K562 (cell line): ENCODE measurements at regions of chr2 and their contacts with region 1.

Region 1: GRCh38 chr2:160994141-160995002 is 165.9 kb upstream of the TANK start:
- DNase-seq: peak; percentile 44 to 73 (median 56)
- ATAC-seq: peak; percentile 97
- H3K4me3 ChIP-seq: no peak overlapping the region
- H3K27ac ChIP-seq: no peak overlapping the region
- H3K4me1 ChIP-seq: no peaks in the 10 kb centered on the region
- H3K27me3 ChIP-seq: no peaks in the 10 kb centered on the region
- CTCF ChIP-seq: peak; percentile 69 to 91 (median 80); a peak in 5 of 6 replicates
- EP300 ChIP-seq: no peak
- POLR2A ChIP-seq: no peak
- RAD21 ChIP-seq: peak; percentile 70 to 83

Region 2: DNA sequence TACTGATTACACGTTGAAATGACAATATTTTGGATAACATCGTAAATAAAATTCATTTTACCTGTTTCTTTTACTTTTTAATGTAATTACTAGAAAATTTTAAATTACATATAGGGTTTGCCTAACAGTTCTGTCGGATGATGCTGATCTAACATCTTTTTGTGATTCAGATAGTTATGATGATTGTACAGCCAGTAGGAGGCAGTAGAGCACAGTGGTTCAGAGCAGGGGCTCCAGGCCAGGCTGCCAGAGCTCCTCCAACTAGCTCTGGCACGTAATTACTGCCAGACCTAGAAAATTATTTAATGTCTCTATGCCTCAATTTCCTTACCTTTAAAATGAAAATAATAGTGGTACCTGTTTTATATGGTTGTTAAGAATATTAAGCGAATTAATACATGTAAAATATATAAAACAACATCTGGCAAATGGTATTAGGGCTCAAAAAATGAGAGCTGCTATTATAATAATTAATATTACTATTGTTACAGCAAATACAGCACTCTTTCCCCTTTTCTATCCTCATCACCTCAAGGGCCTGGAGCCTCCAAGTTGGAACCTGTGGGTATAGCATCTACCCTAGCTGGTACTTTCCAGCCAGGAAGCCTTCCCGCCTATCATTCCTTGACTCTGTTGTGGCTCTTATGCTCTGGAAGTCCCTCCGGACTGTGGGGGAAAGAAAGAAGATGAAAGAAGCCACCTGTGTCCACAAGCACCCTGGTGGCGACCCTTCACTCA is 884.3 kb before region 1 on chr2:
- CTCF ChIA-PET with region 1: interaction called, 3 read pairs
- POLR2A ChIA-PET with region 1: no interaction called
- in situ Hi-C with region 1: no loop called
- intact Hi-C with region 1: loop called (anchors 2 kb)
- DNase-seq: peak; percentile 50 to 64 (median 61)
- ATAC-seq: peak; percentile 95
- H3K4me3 ChIP-seq: no peak overlapping the region
- H3K27ac ChIP-seq: no peak overlapping the region
- H3K4me1 ChIP-seq: no peaks in the 10 kb centered on the region
- H3K27me3 ChIP-seq: no peaks in the 10 kb centered on the region
- CTCF ChIP-seq: peak; percentile 64 to 85 (median 77)
- EP300 ChIP-seq: no peak
- POLR2A ChIP-seq: no peak
- RAD21 ChIP-seq: peak; percentile 73 to 75

Region 3: GRCh38 chr2:160252278-160252887 is 742.0 kb before region 1 on chr2:
- CTCF ChIA-PET with region 1: no interaction called
- POLR2A ChIA-PET with region 1: no interaction called
- in situ Hi-C with region 1: no loop called
- intact Hi-C with region 1: loop called (anchors 2 kb)
- DNase-seq: peak; percentile 28 to 39 (median 38)
- ATAC-seq: peak; percentile 53; the same call in 1 of the 3 replicates
- H3K4me3 ChIP-seq: no peak overlapping the region
- H3K27ac ChIP-seq: no peak overlapping the region
- H3K4me1 ChIP-seq: no peaks in the 10 kb centered on the region
- H3K27me3 ChIP-seq: no peaks in the 10 kb centered on the region
- CTCF ChIP-seq: peak; percentile 31 to 72 (median 56); a peak in 5 of 6 replicates
- EP300 ChIP-seq: no peak
- POLR2A ChIP-seq: no peak
- RAD21 ChIP-seq: peak; percentile 40 to 64

Region 4: DNA sequence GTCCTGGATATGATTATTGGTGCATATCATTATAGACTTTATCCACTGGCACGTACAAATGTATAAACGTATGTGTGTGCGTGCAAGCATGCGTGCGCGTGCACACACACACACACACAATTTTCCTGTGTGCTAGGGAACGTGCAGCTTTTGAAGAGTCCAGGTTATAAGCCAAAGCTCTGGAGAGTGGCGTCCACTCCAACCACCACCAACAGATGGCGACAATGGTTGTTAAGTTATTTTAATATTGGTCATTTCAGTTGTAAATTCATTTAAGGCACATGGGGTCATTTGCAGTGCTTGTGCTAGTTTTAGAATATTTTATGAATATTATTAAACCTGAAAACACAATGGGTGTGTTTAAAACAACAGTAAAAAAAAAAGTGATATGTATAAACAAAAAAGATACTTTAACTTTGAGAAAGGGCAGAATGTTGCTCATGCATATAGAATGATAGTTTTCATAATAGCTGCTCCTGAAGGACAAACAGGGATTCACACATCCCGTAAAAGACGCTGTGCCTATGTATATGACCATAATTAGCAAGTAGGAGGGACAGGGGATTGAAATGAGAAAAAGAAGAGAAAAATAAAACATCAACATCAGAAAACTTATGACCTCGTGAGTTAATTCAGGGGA is 670.1 kb before region 1 on chr2:
- CTCF ChIA-PET with region 1: interaction called, 7 read pairs
- POLR2A ChIA-PET with region 1: interaction called, 3 read pairs
- in situ Hi-C with region 1: no loop called
- intact Hi-C with region 1: loop called (anchors 1 kb)
- DNase-seq: peak; percentile 21 to 37 (median 23)
- ATAC-seq: peak; percentile 80
- H3K4me3 ChIP-seq: no peak overlapping the region
- H3K27ac ChIP-seq: no peak overlapping the region
- H3K4me1 ChIP-seq: no peaks in the 10 kb centered on the region
- H3K27me3 ChIP-seq: no peaks in the 10 kb centered on the region
- CTCF ChIP-seq: peak; percentile 43 to 66 (median 57); a peak in 5 of 6 replicates
- EP300 ChIP-seq: no peak
- POLR2A ChIP-seq: no peak
- RAD21 ChIP-seq: peak in 1 of 2 experiments; percentile 46; a peak in 3 of 4 replicates

Region 5: GRCh38 chr2:160429248-160430000 is 564.9 kb before region 1 on chr2:
- CTCF ChIA-PET with region 1: interaction called, 4 read pairs
- POLR2A ChIA-PET with region 1: no interaction called
- in situ Hi-C with region 1: no loop called
- intact Hi-C with region 1: loop called (anchors 2 kb)
- DNase-seq: peak; percentile 14 to 34 (median 20)
- ATAC-seq: peak; percentile 74
- H3K4me3 ChIP-seq: no peak overlapping the region
- H3K27ac ChIP-seq: no peak overlapping the region
- H3K4me1 ChIP-seq: no peaks in the 10 kb centered on the region
- H3K27me3 ChIP-seq: no peaks in the 10 kb centered on the region
- CTCF ChIP-seq: peak in 2 of 3 experiments; percentile 14 to 55; a peak in 4 of 6 replicates
- EP300 ChIP-seq: no peak
- POLR2A ChIP-seq: no peak
- RAD21 ChIP-seq: peak; percentile 35 to 48; a peak in 3 of 4 replicates